ENCODE measurements at regions of chr3 and their contacts with region 1.

Region 1: GRCh38 chr3:13091898-13092611 is 18.8 kb upstream of the IQSEC1 start:
- DNase-seq: peak; percentile 85
- ATAC-seq: peak; percentile 77 to 86

Region 2: GRCh38 chr3:13189639-13190377 is 97.8 kb after region 1 on chr3:
- intact Hi-C with region 1: no loop called
- DNase-seq: no peak
- ATAC-seq: peak; percentile 17 to 36

Region 3: GRCh38 chr3:13282986-13283876 is 191.2 kb after region 1 on chr3:
- intact Hi-C with region 1: loop called in 1 of 2 experiments (anchors 10 kb)
- DNase-seq: no peak
- ATAC-seq: peak; percentile 11 to 32

Region 4: GRCh38 chr3:13452490-13453335 is 360.7 kb after region 1 on chr3:
- intact Hi-C with region 1: loop called (anchors 2 to 5 kb)
- DNase-seq: no peak
- ATAC-seq: peak; percentile 49 to 60